PC-3 (cell line): ENCODE measurements at regions of chr10 and their contacts with region 1.

Region 1: GRCh38 chr10:13492493-13493175 is 36.2 kb downstream of the BEND7 start:
- DNase-seq: no peak
- ATAC-seq: peak; percentile 59
- H3K4me3 ChIP-seq: peak overlapping the region; percentile 51
- H3K27ac ChIP-seq: no peak overlapping the region
- H3K4me1 ChIP-seq: no peaks in the 10 kb centered on the region
- H3K27me3 ChIP-seq: no peaks in the 10 kb centered on the region
- CTCF ChIP-seq: no peak

Region 2: GRCh38 chr10:13511409-13511808 is 18.8 kb after region 1 on chr10:
- CTCF ChIA-PET with region 1: no interaction called
- POLR2A ChIA-PET with region 1: no interaction called
- intact Hi-C with region 1: no loop called
- DNase-seq: no peak
- ATAC-seq: no peak
- H3K4me3 ChIP-seq: no peak overlapping the region
- H3K27ac ChIP-seq: no peak overlapping the region
- H3K4me1 ChIP-seq: no peaks in the 10 kb centered on the region
- H3K27me3 ChIP-seq: no peaks in the 10 kb centered on the region
- CTCF ChIP-seq: no peak

Region 3: GRCh38 chr10:13586676-13587355 is 94.2 kb after region 1 on chr10 and contains the start of gene PRPF18:
- CTCF ChIA-PET with region 1: no interaction called
- POLR2A ChIA-PET with region 1: no interaction called
- intact Hi-C with region 1: loop called (anchors 5 kb)
- DNase-seq: peak; percentile 85
- ATAC-seq: peak; percentile 97
- H3K4me3 ChIP-seq: peak within 1 kb of the TSS; percentile 89
- H3K27ac ChIP-seq: no peak within 1 kb of the TSS
- H3K4me1 ChIP-seq: no peaks in the 10 kb centered on the region
- H3K27me3 ChIP-seq: no peaks in the 10 kb centered on the region
- CTCF ChIP-seq: peak; percentile 74
- total RNA-seq, gene PRPF18: 10.2 and 13.7 TPM in 2 replicates